ENCODE measurements at regions of chr16 and their contacts with region 1.

Region 1: DNA sequence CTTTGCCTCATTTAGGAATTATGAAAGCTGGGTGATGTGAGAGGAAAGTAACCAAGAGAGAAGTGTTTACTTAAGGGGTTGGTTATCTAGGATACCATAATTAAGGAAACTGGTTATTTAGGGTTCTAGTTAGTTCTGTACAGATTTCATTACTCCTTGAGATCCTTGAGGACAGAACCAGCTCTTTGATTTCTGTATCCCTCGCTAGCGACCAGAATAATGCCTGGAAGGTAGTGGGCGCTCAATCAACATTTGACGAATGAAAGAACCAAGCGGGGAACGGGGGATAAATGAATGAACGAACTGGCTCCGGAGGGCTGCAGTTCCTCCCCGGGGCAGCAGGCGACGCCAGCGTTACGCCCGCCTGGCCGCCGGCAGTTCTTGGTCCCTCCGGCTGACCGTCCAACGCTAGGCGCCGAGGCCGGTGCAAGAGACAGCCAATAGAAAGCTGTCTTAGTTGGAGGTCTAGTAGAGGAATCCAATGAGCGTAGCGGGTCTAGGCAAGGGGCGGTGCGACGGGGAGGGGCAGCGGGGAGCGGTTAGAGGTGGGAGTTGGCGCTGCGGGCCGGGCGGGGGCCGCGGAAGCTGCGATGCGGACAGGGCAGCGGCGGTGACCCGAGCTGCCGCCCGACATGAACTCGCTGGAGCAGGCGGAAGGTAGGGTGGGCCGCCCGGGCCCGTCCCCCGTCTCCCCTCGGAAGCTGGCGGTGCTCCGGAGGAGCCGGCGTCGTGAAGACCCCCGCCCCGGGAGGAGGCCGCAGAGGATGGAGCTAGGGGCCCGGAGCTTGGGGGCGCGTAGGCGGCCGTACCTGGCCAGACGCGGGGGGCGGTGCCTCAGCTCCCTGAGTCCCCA is at the start of gene CNEP1R1:
- DNase-seq: peak; percentile 97 to 98
- ATAC-seq: peak; percentile 99
- H3K4me3 ChIP-seq: peak within 1 kb of the TSS; percentile 89
- H3K27ac ChIP-seq: peak within 1 kb of the TSS; percentile 82 to 95
- H3K4me1 ChIP-seq: peaks cover 13% of the 10 kb centered on the region; the same call in 2 of the 3 replicates
- CTCF ChIP-seq: peak; percentile 92
- EP300 ChIP-seq: no peak
- POLR2A ChIP-seq: peak; percentile 87
- RAD21 ChIP-seq: peak; percentile 81 to 90
- polyA plus RNA-seq, gene CNEP1R1: 29.3 and 32.0 TPM in 2 replicates

Region 2: DNA sequence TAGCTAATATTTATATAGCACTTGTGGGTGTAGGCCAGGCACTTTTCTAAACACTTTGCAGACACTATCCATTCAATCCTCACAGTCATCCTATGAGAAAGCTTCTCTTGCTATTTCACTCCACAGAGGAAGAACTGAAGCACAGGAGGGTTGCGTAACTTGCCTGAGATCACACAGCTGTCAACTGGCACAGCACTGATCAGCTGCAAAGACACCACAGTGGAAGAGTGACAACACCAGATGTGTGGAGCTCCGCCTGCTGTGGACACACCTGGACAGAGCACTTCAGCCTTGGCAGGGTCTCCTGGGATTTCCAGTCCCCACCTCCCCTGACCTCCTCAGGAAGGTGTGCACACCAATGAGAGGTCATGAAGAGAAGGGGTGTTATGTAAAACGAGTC is 13.2 kb before region 1 on chr16:
- CTCF ChIA-PET with region 1: interaction called, 19 read pairs
- POLR2A ChIA-PET with region 1: no interaction called
- DNase-seq: no peak
- ATAC-seq: no peak
- H3K4me3 ChIP-seq: no peak overlapping the region
- H3K27ac ChIP-seq: no peak overlapping the region
- H3K4me1 ChIP-seq: no peaks in the 10 kb centered on the region
- CTCF ChIP-seq: no peak
- EP300 ChIP-seq: no peak
- POLR2A ChIP-seq: no peak
- RAD21 ChIP-seq: no peak

Region 3: DNA sequence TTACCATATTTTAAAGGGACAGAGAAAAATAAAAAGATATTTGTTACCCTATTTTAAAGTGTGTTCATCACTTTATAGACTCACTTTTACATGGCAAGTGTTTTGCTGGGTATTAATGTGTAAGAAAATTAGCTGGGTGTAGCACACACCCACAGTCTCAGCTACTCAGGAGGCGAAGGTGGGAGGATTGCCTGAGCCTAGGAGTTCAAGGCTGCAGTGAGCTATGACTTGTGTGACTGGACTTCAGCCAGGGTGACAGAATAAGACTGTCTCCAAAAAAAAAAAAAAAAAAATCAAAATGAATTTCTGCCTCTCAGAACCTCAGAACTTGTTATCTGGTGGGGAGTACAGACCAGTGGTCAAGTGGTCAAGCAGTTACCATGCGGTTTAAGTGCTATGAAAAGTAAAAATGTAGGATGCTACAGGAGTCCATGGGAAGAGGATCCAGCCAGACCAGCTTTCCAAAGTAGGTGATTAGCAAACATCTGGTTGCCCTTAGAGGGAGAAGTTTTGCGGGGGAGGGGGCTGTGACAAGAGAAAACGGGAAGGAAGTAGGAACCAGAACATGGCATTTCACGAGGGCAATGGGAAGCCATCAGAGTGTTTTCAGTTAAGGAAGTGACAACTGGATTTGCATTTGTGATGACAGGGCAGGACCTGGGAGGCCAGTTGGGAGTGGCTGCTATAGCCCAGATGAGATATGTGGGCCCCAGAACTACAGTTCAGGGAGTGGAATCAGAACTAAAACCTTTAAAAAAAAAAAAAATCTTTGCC is 14.0 kb after region 1 on chr16:
- CTCF ChIA-PET with region 1: interaction called, 33 read pairs
- POLR2A ChIA-PET with region 1: interaction called, 6 read pairs
- DNase-seq: no peak
- ATAC-seq: no peak
- H3K4me3 ChIP-seq: no peak overlapping the region
- H3K27ac ChIP-seq: no peak overlapping the region
- H3K4me1 ChIP-seq: peaks cover 10% of the 10 kb centered on the region
- CTCF ChIP-seq: no peak
- EP300 ChIP-seq: no peak
- POLR2A ChIP-seq: no peak
- RAD21 ChIP-seq: no peak

Region 4: DNA sequence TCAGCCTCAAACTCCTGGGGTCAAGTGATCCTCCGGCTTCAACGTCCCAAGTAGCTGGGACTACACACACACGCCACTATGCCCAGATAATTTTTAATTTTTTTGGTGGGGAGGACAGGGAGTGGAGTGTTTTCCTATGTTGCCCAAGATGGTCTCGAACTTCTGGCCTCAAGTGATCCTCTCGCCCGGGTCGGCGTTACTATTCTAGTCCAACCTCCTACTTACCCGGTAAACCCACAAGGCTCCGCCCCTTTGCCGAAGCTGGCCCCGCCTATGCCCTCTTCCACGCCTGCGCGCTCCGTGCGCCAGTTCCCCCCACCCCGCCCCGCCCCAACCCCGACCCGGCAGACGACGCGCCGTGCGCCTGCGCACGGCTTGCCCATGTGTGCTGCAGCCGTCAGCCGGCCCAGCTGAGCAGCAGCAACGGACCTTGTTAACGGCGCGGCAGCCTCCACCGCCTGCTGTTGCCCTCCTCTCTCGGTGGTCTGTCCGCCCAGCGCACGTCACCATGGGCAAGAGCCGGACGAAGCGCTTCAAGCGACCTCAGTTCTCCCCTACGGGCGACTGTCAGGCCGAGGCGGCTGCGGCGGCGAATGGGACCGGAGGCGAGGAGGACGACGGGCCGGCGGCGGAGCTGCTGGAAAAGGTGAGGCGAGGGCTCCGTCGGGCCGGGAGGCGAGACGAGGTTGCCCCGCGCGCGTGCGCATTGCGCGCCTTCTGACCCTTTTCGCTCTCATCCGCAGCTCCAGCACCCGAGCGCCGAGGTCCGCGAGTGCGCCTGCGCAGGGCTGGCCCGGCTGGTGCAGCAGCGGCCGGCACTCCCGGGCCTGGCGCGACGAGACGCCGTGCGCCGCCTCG is 40.9 kb after region 1 on chr16 and contains the start of gene HEATR3:
- CTCF ChIA-PET with region 1: interaction called, 16 read pairs
- POLR2A ChIA-PET with region 1: interaction called, 4 read pairs
- DNase-seq: peak; percentile 93 to 95
- ATAC-seq: peak; percentile 89 to 97
- H3K4me3 ChIP-seq: peak within 1 kb of the TSS; percentile 90
- H3K27ac ChIP-seq: peak within 1 kb of the TSS; percentile 96 to 98
- H3K4me1 ChIP-seq: peaks cover 16% of the 10 kb centered on the region
- CTCF ChIP-seq: no peak
- EP300 ChIP-seq: no peak
- POLR2A ChIP-seq: peak; percentile 90
- RAD21 ChIP-seq: no peak
- polyA plus RNA-seq, gene HEATR3: 28.2 and 30.8 TPM in 2 replicates

Region 5: DNA sequence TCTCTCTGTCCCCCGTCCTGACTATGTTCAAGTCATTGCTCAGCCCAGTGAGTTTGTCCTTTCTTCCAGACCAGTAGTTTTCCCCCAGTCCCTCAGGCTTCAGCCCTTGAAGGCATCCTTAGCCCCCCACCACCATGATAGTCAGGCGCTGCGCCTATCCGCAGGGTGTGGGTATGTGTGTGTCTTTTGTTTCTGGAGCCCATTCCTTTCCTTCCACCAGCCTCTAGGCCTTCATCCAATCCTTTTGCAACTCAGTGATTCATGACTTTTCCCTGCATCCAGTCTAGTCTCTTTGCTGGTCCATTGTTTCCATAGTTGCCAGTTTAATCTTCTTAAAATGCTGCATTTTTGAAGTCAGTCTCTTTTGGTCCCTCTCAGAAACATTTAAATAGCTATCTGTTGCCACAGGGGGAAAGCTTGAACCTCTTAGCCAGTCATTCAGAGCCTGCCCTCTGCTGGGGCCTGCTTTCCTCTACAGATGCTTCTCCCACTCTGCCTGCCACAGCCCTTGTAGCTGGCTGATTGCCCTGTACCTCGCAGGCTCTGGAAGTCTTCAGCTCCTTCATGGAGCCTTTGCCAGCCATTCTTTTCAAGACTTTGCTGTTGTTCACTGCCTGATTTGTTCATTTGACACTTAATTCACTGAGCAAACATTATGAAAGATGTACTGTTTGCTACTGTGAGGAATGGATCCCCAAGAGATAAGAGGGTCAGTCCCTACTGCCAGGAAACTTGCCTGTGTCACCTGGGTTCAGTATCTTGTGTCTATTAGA is 185.5 kb after region 1 on chr16:
- CTCF ChIA-PET with region 1: interaction called, 43 read pairs
- POLR2A ChIA-PET with region 1: interaction called, 6 read pairs
- DNase-seq: peak; percentile 52 to 78
- ATAC-seq: peak; percentile 98
- H3K4me3 ChIP-seq: no peak overlapping the region
- H3K27ac ChIP-seq: peak overlapping the region in 1 of 2 experiments; percentile 5; a peak in 3 of 6 replicates
- H3K4me1 ChIP-seq: peaks cover 44% of the 10 kb centered on the region
- CTCF ChIP-seq: peak; percentile 62
- EP300 ChIP-seq: no peak
- POLR2A ChIP-seq: no peak
- RAD21 ChIP-seq: peak; percentile 76 to 77

Region 6: GRCh38 chr16:50326949-50327402 is 302.1 kb after region 1 on chr16:
- CTCF ChIA-PET with region 1: interaction called, 11 read pairs
- POLR2A ChIA-PET with region 1: no interaction called
- DNase-seq: peak in 1 of 2 experiments; percentile 58
- ATAC-seq: peak; percentile 75 to 89; a peak in 5 of 6 replicates
- H3K4me3 ChIP-seq: no peak overlapping the region
- H3K27ac ChIP-seq: no peak overlapping the region
- H3K4me1 ChIP-seq: no peaks in the 10 kb centered on the region
- CTCF ChIP-seq: peak; percentile 46
- EP300 ChIP-seq: no peak
- POLR2A ChIP-seq: no peak
- RAD21 ChIP-seq: peak; percentile 40 to 56; a peak in 4 of 5 replicates

Measured in A549 (cell line).